Right cardiac atrium (tissue), 5 donors: ENCODE measurements at regions of chr18 and their contacts with region 1.

Region 1: GRCh38 chr18:6543330-6543908 is 128.7 kb upstream of the L3MBTL4 start:
- DNase-seq: no peak
- ATAC-seq: peak in 1 of 2 donors; percentile 29
- H3K4me3 ChIP-seq: no peak overlapping the region
- H3K27ac ChIP-seq: no peak overlapping the region
- H3K4me1 ChIP-seq: no peaks in the 10 kb centered on the region
- H3K27me3 ChIP-seq: no peaks in the 10 kb centered on the region

Region 2: DNA sequence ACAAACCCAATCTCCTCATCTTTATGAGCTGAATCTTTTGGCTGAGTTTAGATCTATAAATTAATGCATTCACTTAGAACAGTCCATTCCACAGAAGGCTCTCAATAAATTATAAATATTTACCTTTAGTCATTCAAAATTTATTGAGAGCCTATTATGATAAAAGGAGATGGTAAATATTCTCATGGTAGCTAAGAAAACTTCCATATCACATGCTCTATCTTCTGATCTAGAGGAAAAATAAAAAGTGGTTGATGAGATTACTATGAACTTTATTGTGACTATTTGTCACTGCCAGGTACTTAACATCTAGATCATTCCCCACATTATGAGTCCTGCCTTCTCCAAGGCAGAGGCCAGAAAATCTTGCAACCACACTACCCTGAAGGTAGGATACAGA is 191.1 kb before region 1 on chr18:
- intact Hi-C with region 1: no loop called
- DNase-seq: no peak
- ATAC-seq: no peak
- H3K4me3 ChIP-seq: no peak overlapping the region
- H3K27ac ChIP-seq: no peak overlapping the region
- H3K4me1 ChIP-seq: no peaks in the 10 kb centered on the region
- H3K27me3 ChIP-seq: no peaks in the 10 kb centered on the region

Region 3: GRCh38 chr18:6764382-6764781 is 221.0 kb after region 1 on chr18:
- intact Hi-C with region 1: no loop called
- DNase-seq: no peak
- ATAC-seq: peak in 1 of 2 donors; percentile 71
- H3K4me3 ChIP-seq: no peak overlapping the region
- H3K27ac ChIP-seq: no peak overlapping the region
- H3K4me1 ChIP-seq: no peaks in the 10 kb centered on the region
- H3K27me3 ChIP-seq: no peaks in the 10 kb centered on the region

Region 4: GRCh38 chr18:6885992-6886796 is 342.8 kb after region 1 on chr18:
- intact Hi-C with region 1: loop called (anchors 2 to 5 kb)
- DNase-seq: peak in 2 of 3 donors; percentile 26 to 39
- ATAC-seq: peak; percentile 66 to 86
- H3K4me3 ChIP-seq: no peak overlapping the region
- H3K27ac ChIP-seq: no peak overlapping the region
- H3K4me1 ChIP-seq: no peaks in the 10 kb centered on the region
- H3K27me3 ChIP-seq: no peaks in the 10 kb centered on the region

Region 5: GRCh38 chr18:6941996-6942395 is 398.6 kb after region 1 on chr18:
- intact Hi-C with region 1: no loop called
- DNase-seq: no peak
- ATAC-seq: no peak
- H3K4me3 ChIP-seq: no peak overlapping the region
- H3K27ac ChIP-seq: no peak overlapping the region
- H3K4me1 ChIP-seq: no peaks in the 10 kb centered on the region
- H3K27me3 ChIP-seq: no peaks in the 10 kb centered on the region

Region 6: DNA sequence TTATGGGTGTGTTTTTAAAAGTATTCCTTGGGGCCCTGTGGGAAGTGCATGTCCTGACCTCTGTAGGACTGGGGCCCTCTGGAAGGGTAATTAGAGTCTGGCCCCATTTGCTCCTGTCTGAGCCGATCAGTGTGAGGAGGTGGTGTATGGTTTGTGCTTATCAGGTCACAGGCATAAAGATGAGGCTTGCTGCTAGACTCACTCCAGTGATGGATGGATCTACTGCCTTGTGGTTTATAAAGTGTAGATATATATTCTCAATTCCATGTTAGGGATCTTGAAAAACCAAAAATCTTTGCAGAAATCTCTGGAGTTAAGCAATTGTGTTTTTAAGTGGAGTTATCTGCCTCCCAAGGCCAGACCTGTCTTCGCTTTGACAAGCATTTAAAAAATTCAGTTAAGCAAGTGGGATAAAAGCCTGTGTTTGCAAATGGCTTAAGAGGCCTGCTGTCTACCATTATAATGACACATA is 1206.1 kb after region 1 on chr18:
- intact Hi-C with region 1: no loop called
- DNase-seq: no peak
- ATAC-seq: peak; percentile 75 to 78
- H3K4me3 ChIP-seq: no peak overlapping the region
- H3K27ac ChIP-seq: no peak overlapping the region
- H3K4me1 ChIP-seq: peaks cover 21% of the 10 kb centered on the region
- H3K27me3 ChIP-seq: no peaks in the 10 kb centered on the region